Heart left ventricle (tissue), 16 donors: ENCODE measurements at regions of chr15 and their contacts with region 1.

Region 1: DNA sequence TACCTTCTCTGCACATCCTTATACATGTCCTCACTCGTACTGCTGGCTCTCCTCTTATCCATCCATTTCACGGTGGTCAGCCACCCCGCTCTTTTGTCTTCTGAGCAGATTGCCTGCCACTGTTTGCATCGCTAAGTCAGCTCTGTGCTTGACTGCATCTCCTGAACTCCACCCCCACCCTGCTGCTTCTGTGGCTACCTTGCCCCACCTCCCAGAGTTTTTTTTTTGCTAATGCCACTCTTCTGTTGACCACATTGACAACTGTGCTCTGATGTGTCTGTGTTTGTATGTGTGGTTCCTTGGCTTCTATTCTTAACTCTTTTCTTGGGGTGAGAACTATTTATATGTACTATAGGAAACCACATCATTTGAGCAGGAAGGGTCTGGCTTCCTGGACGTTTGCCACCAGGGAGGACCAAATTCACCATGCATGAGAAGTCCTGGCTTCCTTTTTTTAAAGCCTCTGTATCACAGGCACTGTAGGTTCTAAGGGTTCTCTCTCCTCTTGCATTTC is 12.8 kb upstream of the MTMR10 start:
- DNase-seq: peak; percentile 55 to 80 (median 65)
- ATAC-seq: peak; percentile 55 to 96 (median 75)
- H3K4me3 ChIP-seq: peak overlapping the region in 1 of 12 donors; percentile 10
- H3K27ac ChIP-seq: peak overlapping the region in 11 of 12 donors; percentile 9 to 71 (median 51)
- H3K4me1 ChIP-seq: peaks cover 0 to 24% (median 6%) of the 10 kb centered on the region in 12 donors
- H3K27me3 ChIP-seq: no peaks in the 10 kb centered on the region
- CTCF ChIP-seq: no peak
- POLR2A ChIP-seq: no peak

Region 2: GRCh38 chr15:30670056-30670455 is 334.2 kb before region 1 on chr15:
- intact Hi-C with region 1: no loop called
- DNase-seq: no peak
- ATAC-seq: no peak
- H3K4me3 ChIP-seq: no peak overlapping the region
- H3K27ac ChIP-seq: no peak overlapping the region
- H3K4me1 ChIP-seq: peaks cover 0 to 5% (median 0%) of the 10 kb centered on the region in 12 donors
- H3K27me3 ChIP-seq: no peaks in the 10 kb centered on the region
- CTCF ChIP-seq: no peak
- POLR2A ChIP-seq: no peak

Region 3: GRCh38 chr15:31069360-31070000 is 65.2 kb after region 1 on chr15:
- intact Hi-C with region 1: loop called in 1 of 10 experiments (anchors 10 kb)
- DNase-seq: no peak
- ATAC-seq: no peak
- H3K4me3 ChIP-seq: no peak overlapping the region
- H3K27ac ChIP-seq: no peak overlapping the region
- H3K4me1 ChIP-seq: peaks cover 0 to 3% (median 0%) of the 10 kb centered on the region in 12 donors
- H3K27me3 ChIP-seq: no peaks in the 10 kb centered on the region
- CTCF ChIP-seq: no peak
- POLR2A ChIP-seq: no peak